ENCODE measurements at regions of chr22 and their contacts with region 1.

Region 1: DNA sequence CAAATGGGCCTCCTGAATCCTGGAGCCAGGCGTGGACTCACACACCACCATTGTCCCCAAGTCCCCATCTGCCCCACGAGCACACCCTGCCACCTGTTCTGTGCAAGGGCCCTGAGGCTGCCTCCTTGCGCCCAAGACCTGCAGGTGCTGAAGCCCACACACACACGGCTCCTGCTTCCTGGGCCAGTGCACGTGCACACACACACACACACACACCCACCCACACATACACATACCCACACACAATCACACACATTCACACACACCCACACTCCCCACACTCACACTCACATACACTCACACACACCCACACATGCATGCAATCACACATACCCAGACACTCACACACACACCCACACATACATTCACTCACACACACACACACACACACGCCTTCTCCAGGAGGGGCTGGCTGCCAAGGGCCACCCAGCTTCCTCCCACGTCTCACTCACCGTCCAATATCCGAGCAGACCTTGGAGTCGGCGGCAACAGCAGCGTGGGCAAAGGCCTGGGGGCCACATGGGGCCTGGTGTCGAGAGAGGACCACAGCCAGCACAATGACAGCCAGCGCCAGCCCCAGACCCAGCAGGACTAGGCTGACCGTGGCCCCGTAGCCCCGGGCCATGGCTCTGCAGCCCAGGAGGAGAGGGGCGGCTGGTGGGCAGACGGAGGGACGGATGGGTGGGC is 638 bp downstream of the GGT5 start:
- DNase-seq: no peak
- ATAC-seq: peak; percentile 15

Region 2: DNA sequence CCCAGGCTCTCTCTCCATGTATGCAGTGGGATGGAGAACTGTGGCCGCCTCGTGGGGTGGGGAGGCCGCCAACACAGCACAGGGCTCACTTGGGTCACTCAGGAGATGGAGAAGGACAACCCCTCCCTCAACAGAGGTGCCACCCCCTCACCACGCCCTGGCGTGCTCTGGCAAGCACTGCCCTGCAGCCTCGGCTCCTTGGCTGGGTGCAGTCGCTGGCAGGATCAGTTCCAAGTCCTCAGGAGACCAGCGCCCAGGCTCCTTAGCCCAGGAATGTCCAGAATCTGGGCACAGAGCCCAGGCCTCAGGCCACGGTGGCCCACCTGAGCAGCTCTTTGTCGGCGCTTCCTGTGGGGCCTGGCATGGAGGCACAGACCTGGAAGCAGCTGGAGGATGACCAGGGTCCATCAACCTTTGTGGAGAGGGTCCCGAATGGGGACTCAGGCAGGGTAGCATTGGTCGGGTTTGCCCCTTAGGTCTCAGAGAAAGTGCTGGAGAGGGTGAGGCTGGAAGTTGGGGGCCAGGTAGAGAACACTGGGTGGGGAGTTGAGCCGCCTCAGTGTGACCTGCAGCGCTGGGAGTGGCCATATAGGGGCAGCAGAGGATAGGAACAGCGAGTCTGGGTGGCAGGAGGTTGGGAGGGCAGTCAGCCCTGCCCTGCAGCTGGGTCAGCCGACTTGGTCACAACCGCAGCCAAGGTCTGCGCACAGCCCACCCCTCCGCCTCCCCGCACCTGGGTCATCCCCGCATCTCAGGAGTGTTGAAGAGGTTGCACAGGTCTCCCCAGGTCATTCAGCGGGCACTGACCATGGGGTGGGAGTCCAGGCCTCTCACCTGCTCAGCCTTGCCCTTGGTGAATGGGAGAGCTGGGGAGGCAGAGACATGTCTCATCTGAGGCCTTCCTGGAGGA is 54.7 kb before region 1 on chr22:
- intact Hi-C with region 1: loop called (anchors 2 kb)
- DNase-seq: peak; percentile 83
- ATAC-seq: peak; percentile 88

Region 3: DNA sequence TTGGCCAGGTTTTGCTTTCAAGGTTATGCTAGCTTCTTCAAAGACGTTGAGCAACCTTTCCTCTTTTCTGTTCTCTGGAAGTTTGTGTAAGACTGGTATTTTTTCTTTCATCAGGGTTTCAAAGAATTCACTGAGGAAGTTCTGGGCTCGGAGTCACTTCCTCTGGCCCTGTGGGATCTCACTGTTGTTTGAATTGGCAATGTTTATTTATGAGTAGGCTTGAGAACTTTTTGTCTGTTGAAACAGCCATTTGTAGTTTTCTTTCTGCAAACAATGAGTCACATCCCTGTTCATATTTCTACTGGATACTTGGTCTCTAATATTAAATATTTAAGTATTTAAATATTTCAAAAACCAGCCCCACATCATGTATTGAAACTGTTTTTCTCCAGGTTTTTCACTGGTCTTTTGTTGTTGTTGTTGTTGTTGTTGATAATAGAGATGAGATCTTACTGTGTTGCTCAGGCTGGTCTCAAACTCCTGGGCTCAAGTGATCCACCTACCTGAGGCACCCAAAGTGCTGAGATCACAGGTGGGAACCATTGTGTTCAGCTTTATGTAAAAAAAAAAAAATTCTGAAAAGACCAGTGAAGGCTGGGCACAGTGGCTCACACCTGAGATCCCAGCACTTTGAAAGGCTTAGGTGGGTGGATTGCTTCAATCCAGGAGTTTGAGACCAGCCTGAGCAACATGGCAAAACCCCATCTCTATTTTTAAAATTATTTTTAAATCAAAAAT is 36.1 kb before region 1 on chr22:
- intact Hi-C with region 1: loop called (anchors 1 kb)
- DNase-seq: no peak
- ATAC-seq: peak; percentile 92

Region 4: DNA sequence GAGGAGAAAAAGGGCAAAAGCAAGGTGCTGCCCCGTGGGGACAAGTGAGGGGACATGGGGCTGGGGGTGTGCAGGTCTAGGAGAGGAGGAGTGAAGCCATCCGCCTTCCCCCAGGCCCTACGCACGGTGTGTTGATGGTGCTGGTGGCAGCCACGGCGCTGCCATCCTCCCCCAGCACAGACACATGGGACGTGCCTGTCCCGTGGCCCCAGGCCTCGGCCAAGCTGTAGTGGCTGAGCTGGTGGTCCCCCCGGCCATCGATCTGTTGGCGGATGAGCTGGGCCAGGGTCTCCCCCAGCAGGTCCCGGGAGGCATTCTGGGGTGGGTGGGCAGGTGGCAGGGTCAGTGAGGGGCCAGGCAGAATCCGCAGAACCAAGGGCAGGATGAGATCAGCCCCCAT is 18.3 kb before region 1 on chr22:
- intact Hi-C with region 1: loop called (anchors 2 kb)
- DNase-seq: no peak
- ATAC-seq: no peak

Region 5: GRCh38 chr22:24315367-24315966 is 71.2 kb after region 1 on chr22:
- intact Hi-C with region 1: no loop called
- DNase-seq: no peak
- ATAC-seq: no peak

Region 6: DNA sequence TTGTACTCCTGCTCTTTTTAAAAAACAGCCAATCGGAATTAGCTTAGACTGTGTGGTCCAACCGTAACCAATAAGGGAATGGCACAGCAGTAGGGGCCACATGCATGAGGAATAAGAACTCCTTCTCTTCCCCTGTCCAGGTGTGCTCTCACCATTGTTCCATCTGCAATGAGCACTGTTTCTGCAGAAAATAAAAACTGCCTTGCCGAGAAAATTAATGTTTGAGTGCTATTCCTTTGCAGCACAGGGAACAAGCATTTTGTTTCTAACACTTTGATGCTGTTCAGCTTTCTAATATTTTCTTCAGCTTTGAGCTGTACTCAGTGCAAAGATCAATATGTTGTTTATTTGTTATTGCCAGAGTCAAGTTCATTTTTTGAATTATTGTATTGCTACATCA is 472.4 kb after region 1 on chr22:
- intact Hi-C with region 1: no loop called
- DNase-seq: no peak
- ATAC-seq: no peak

Measured in Right ventricle myocardium inferior (tissue), 1 donor.